Esophagus muscularis mucosa (tissue), 4 donors: ENCODE measurements at regions of chr6 and their contacts with region 1.

Region 1: GRCh38 chr6:73129653-73130443 is 95.4 kb downstream of the KHDC1L start:
- DNase-seq: peak; percentile 94
- H3K4me3 ChIP-seq: peak overlapping the region in 2 of 4 donors; percentile 30 to 31
- H3K27ac ChIP-seq: no peak overlapping the region
- H3K4me1 ChIP-seq: peaks cover 0 to 10% (median 9%) of the 10 kb centered on the region in 4 donors
- H3K27me3 ChIP-seq: no peaks in the 10 kb centered on the region
- CTCF ChIP-seq: peak; percentile 78 to 97 (median 93)
- EP300 ChIP-seq: no peak
- POLR2A ChIP-seq: no peak

Region 2: GRCh38 chr6:72616406-72617015 is 513.3 kb before region 1 on chr6:
- intact Hi-C with region 1: loop called (anchors 2 kb)
- DNase-seq: no peak
- H3K4me3 ChIP-seq: no peak overlapping the region
- H3K27ac ChIP-seq: no peak overlapping the region
- H3K4me1 ChIP-seq: peaks cover 17 to 21% (median 21%) of the 10 kb centered on the region in 4 donors
- H3K27me3 ChIP-seq: peaks cover 0 to 6% (median 0%) of the 10 kb centered on the region in 4 donors
- CTCF ChIP-seq: peak; percentile 42 to 61 (median 60)
- EP300 ChIP-seq: no peak
- POLR2A ChIP-seq: no peak

Region 3: DNA sequence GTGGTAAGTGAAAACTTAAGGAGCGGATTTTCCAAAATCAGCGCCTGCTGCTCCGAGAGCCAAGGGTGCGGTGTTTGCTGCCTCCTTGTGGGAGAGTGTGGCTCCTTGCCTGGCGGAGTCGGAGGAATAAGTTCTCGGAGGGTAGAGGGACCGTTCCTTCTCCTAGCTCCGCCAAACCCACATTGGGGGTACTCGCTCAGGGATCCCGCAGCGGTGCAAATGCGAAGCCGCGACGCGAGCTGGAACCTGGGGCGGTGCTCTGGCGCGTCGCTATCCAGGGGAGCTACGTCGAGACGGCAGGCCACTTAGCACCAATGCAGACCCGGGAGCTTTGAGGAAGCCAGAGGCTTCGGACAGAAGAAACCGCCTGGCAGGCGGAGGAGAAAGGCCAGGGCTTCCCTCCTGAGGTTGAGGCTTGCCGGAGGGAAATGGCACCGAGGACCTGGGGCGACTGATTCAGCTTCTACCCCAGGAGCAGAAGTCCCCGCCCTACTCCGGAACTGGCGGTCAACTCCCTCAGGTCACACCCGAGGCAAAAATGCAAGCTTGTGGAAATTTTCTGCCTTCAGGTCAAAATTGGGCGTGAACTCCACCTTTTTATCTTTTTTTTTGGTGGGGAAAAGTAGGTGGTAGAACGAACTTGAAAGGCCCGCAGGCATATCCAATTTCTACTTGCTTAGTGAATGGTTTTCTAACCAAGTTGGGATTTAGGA is 259.1 kb after region 1 on chr6:
- intact Hi-C with region 1: no loop called
- DNase-seq: no peak
- H3K4me3 ChIP-seq: peak overlapping the region; percentile 51 to 64 (median 56)
- H3K27ac ChIP-seq: peak overlapping the region; percentile 42 to 64 (median 48)
- H3K4me1 ChIP-seq: peaks cover 3 to 11% (median 9%) of the 10 kb centered on the region in 4 donors
- H3K27me3 ChIP-seq: no peaks in the 10 kb centered on the region
- CTCF ChIP-seq: peak; percentile 39 to 67 (median 41)
- EP300 ChIP-seq: no peak
- POLR2A ChIP-seq: no peak